CD4-positive, alpha-beta memory T cell (primary cell): ENCODE measurements at regions of chr1 and their contacts with region 1.

Region 1: DNA sequence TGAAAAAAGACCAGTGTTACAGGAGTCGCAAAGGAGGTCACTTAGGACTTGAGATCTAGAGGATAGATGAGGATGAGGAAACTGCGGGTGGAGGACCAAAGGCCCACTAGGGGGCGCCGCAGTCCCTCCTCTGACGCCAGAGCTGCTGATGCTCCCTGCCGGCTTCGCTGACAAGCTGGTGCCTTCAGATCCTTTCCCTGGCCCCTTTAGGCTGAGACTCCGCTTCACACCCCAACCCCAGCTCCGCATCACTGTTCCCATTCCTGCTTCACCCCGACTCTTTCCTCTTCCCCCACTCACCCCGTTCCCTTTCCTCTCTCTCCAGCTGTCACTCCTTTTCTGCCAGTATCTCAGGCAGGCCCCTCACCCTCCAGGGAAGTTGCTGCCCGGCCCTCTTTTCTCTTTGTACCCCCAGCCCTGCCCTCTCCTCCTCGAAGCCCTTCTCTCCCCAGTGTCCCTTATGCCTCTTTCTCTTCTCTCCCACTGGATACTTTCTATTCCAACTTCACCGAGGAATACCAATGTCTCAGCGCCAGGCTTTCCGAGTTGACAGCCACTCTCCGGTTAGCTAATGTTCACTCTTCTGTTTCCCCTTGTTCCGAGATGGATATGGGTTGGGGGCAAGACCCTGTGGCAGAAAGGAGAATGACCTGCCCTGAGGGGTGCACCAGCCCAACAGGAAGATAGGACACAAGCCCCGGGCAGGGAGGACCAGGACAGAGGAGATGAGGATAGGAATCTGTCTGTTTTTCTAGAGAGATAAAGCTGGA is 4.5 kb downstream of the KCNJ9 start:
- DNase-seq: peak; percentile 66 to 68 (median 67)
- H3K4me3 ChIP-seq: no peak overlapping the region
- H3K4me3 Mint-ChIP-seq: peak overlapping the region in 3 of 8 donors; percentile 6 to 70 (median 45)
- H3K27ac ChIP-seq: no peak overlapping the region
- H3K27ac Mint-ChIP-seq: peak overlapping the region in 6 of 7 donors; percentile 51 to 88 (median 78)
- H3K4me1 ChIP-seq: peaks cover 3% of the 10 kb centered on the region
- H3K4me1 Mint-ChIP-seq: peaks cover 8 to 28% (median 19%) of the 10 kb centered on the region in 4 donors
- H3K27me3 ChIP-seq: peaks cover 18% of the 10 kb centered on the region
- H3K27me3 Mint-ChIP-seq: peaks cover 16 to 18% of the 10 kb centered on the region in 2 donors

Region 2: GRCh38 chr1:160031365-160032164 is 54.3 kb before region 1 on chr1 and contains the start of gene PIGM:
- CTCF ChIA-PET with region 1: interaction called, 18 read pairs
- POLR2A ChIA-PET with region 1: no interaction called
- intact Hi-C with region 1: no loop called
- DNase-seq: peak; percentile 89 to 96 (median 91)
- H3K4me3 ChIP-seq: peak within 1 kb of the TSS; percentile 71 to 79
- H3K4me3 Mint-ChIP-seq: peak within 1 kb of the TSS; percentile 94 to 99 (median 98)
- H3K27ac ChIP-seq: peak within 1 kb of the TSS; percentile 57
- H3K27ac Mint-ChIP-seq: peak within 1 kb of the TSS; percentile 89 to 98 (median 97)
- H3K4me1 ChIP-seq: peaks cover 32% of the 10 kb centered on the region
- H3K4me1 Mint-ChIP-seq: peaks cover 27 to 42% (median 33%) of the 10 kb centered on the region in 4 donors
- H3K27me3 ChIP-seq: no peaks in the 10 kb centered on the region
- H3K27me3 Mint-ChIP-seq: no peaks in the 10 kb centered on the region
- total RNA-seq, gene PIGM: 11.7 to 12.3 TPM

Region 3: GRCh38 chr1:160046494-160047110 is 39.3 kb before region 1 on chr1:
- CTCF ChIA-PET with region 1: interaction called, 141 read pairs
- POLR2A ChIA-PET with region 1: no interaction called
- intact Hi-C with region 1: loop called (anchors 1 kb)
- DNase-seq: peak; percentile 27 to 48 (median 47)
- H3K4me3 ChIP-seq: no peak overlapping the region
- H3K4me3 Mint-ChIP-seq: peak overlapping the region; percentile 57 to 79 (median 70)
- H3K27ac ChIP-seq: no peak overlapping the region
- H3K27ac Mint-ChIP-seq: peak overlapping the region in 3 of 7 donors; percentile 31 to 62 (median 62)
- H3K4me1 ChIP-seq: peaks cover 10% of the 10 kb centered on the region
- H3K4me1 Mint-ChIP-seq: peaks cover 6 to 12% (median 9%) of the 10 kb centered on the region in 4 donors
- H3K27me3 ChIP-seq: no peaks in the 10 kb centered on the region
- H3K27me3 Mint-ChIP-seq: peaks cover 12 to 18% of the 10 kb centered on the region in 2 donors

Region 4: DNA sequence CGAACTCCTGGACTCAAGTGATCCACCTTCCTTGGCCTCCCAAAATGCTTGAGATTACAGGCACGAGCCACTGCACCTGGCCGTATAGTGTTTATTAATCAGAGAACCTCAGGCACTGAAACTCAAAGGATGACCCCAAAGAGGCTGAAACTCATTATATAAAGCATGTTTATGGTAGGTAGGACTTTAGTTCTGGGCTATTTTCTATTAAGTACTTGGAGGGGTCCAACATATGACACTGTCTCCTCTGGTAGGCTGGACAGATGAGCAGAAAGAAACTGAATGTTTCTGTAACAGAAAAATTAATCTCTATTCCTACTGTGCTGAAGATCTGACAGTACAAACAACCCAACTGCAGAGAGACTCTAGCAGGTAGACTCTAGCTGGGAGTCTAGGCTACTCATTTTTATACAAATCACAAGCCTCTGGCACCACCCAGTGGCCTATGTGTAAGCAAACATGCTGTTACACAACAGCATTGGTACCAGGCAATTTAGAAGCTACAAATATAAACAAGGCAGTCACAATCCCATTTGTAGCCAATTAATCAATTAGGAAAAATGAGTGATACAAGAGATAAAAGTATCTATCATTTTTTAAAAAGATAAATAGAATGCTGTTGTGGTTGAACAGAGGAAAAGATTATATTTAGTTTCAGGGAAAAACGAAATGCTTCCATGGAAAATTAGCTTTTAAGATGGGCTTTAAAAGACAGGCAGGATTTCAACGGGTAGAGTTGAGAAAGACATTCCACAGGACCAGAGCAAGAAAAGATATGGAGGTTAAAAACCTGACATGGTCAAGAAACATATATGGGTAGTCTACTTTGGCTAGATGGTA is 166.0 kb after region 1 on chr1:
- CTCF ChIA-PET with region 1: interaction called, 22 read pairs
- POLR2A ChIA-PET with region 1: no interaction called
- intact Hi-C with region 1: loop called (anchors 1 kb)
- DNase-seq: peak; percentile 52 to 72 (median 56)
- H3K4me3 ChIP-seq: no peak overlapping the region
- H3K4me3 Mint-ChIP-seq: no peak overlapping the region
- H3K27ac ChIP-seq: no peak overlapping the region
- H3K27ac Mint-ChIP-seq: peak overlapping the region; percentile 2 to 90 (median 79)
- H3K4me1 ChIP-seq: peaks cover 12% of the 10 kb centered on the region
- H3K4me1 Mint-ChIP-seq: peaks cover 15 to 20% (median 18%) of the 10 kb centered on the region in 4 donors
- H3K27me3 ChIP-seq: no peaks in the 10 kb centered on the region
- H3K27me3 Mint-ChIP-seq: no peaks in the 10 kb centered on the region